Activated T-helper 2 cell treated with anti-CD3 and anti-CD28 coated beads, Interferon-gamma antibody, Interleukin-2, Interleukin-4, amounts not matched to agents 10 μg/mL and 5 μg/mL and 100 μg/mL, durations not matched to agents 14 hours and 24 hours and 36 hours (primary cell): ENCODE measurements at regions of chr15 and their contacts with region 1.

Region 1: DNA sequence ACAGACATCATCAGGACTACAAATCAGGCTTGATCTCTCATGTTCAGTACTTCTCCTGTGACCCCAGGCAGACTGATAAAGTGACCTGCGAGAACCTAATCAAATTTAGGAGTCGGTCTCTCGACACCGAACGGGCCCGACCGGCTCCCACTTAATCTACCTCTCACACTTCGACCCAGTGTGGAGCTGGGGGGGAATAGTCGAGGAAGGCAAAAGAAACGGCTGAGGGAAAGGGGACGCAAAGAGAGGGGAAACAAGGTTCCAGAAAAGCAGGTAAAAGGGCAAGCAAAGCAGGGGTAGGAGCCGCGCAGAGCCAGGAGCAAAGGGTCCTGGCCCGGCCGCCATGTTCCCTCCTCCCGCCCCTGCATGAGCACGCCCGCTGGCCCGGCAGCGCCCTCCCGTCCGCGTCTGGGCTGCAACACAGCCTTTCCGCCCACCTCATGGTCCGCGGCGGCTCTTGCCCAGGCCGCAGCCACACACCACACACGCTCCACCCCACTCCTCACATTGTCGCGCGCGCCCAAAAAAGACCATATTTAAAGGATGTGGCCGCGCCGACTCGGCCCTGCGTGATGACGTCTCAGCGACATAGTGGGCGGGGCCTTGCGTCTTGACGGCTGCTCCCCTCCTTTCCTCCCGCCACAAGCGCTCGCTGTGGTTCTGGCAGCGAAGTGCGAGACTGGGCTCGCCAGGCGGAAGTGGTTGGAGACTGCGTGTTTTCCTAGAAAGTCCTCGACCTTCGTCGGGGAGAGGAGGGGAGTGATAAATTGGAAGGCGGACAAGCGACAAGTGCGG is at the start of gene ICE2:
- DNase-seq: peak; percentile 94
- H3K4me3 Mint-ChIP-seq: peak within 1 kb of the TSS; percentile 97
- H3K27ac Mint-ChIP-seq: peak within 1 kb of the TSS; percentile 99
- H3K4me1 Mint-ChIP-seq: peaks cover 42% of the 10 kb centered on the region
- H3K27me3 Mint-ChIP-seq: no peaks in the 10 kb centered on the region
- total RNA-seq, gene ICE2: 48.0 and 50.4 TPM in 2 replicates

Region 2: DNA sequence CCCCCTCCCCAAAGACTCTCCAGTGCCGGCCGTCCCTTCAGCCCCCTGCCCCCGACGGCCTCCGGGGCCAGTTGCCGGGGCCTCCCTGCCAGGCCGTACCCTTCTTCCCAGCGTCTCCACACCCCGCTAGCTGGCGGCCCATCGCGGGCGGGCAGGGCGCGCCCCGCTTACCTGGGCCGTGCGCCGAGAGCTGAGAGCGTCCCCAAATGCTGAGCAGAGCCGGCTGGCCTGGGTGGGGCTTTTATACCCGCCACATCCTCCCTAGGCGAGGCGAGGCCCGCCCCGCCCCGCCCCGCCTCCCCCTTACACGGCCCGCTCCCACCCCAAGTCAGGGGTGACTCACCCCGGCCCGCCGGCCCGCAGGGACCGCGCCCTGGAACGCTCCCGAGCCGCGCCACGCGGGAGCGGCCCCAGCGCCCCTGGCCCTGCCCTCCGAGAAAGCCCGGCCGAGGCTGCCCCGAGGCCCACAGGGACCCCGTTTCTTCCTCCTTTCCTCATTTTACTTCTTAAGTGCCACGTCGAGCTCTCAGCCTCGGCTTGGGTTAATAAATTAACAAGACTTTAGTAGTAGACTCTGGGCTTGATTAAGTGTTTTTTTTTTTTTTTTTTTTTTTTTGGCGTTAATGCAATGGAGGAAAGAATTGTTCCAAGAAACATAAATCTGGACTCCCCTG is 80.9 kb before region 1 on chr15 and contains the start of gene ANXA2:
- intact Hi-C with region 1: loop called (anchors 1 kb)
- DNase-seq: peak; percentile 81
- H3K4me3 Mint-ChIP-seq: peak within 1 kb of the TSS; percentile 96
- H3K27ac Mint-ChIP-seq: peak within 1 kb of the TSS; percentile 97
- H3K4me1 Mint-ChIP-seq: peaks cover 63% of the 10 kb centered on the region
- H3K27me3 Mint-ChIP-seq: peaks cover under 1% of the 10 kb centered on the region
- total RNA-seq, gene ANXA2: 262 and 267 TPM in 2 replicates